Colonic mucosa (tissue), 4 donors: ENCODE measurements at regions of chr15 and their contacts with region 1.

Region 1: DNA sequence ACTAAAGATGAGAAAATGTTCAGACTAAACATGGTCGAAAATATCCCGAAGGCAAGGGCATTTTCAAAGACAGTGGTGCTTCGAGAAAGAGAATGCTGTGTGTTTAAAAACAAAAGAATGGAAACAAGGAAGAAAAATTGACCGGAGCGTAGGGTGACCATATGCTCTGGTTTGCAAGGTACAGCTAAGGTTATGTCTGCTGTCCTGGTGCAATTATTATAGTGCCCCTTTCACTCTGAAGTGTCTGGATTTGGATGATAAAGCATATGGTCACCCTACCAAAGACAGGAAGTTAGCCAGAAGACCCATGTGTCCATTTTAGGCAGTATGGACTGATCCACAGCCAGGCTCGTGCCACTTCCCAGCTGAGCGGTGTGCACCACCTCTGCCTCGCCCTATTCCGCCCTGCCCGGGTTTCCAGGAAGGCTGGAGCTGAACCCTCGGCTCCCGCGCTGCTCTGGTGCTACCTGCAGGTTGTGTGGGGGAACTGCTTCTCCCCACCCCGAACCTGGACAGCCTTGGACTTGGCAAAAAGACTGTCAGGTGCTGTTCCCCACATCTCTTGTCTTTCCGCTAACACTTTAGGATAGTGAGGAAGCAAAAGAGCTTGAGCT is 25.2 kb downstream of the GOLGA6D start:
- DNase-seq: peak; percentile 78
- H3K4me3 ChIP-seq: no peak overlapping the region
- H3K27ac ChIP-seq: no peak overlapping the region
- H3K4me1 ChIP-seq: no peaks in the 10 kb centered on the region
- H3K27me3 ChIP-seq: no peaks in the 10 kb centered on the region
- CTCF ChIP-seq: peak; percentile 42

Region 2: GRCh38 chr15:75023181-75023871 is 284.6 kb before region 1 on chr15 and contains the start of gene PPCDC:
- intact Hi-C with region 1: loop called (anchors 10 kb)
- DNase-seq: peak; percentile 97
- H3K4me3 ChIP-seq: peak within 1 kb of the TSS; percentile 67
- H3K27ac ChIP-seq: peak within 1 kb of the TSS; percentile 72
- H3K4me1 ChIP-seq: peaks cover 5% of the 10 kb centered on the region
- H3K27me3 ChIP-seq: no peaks in the 10 kb centered on the region
- CTCF ChIP-seq: no peak
- total RNA-seq, gene PPCDC: 10.1 to 23.1 TPM